ENCODE measurements at regions of chr15 and their contacts with region 1.

Region 1: DNA sequence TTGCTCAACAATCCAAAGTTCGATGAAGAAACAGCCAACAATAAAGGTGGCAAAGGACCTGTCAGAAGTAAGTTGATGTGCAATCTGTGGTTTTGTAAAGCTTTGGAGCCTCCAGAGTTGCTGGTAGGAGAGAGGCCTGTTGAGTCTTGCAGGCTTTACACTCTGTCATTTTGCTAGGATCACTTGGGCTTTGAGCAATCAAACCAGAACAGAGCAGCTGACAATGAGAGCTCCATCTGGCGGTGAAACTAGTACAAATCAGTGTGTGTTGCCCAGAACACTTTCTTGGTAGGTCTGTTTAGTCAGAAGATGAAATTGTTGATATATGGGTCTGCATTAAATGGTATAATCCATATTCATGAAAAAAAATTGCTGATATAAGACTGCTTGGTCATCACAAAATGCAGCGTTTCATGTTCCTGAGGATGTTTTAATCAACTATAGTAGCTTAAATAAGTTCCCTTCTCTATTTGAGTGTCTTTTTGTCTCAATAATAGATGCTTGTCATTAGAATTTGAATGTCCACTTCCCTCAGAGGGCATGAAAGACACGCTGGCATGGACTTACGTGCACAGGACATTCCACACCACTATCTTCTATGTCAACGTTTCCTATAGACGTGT is 25.7 kb downstream of the TMOD2 start:
- DNase-seq: peak; percentile 30 to 81 (median 63)
- ATAC-seq: peak; percentile 71
- H3K4me3 ChIP-seq: no peak overlapping the region
- H3K4me3 Mint-ChIP-seq: no peak overlapping the region
- H3K27ac ChIP-seq: no peak overlapping the region
- H3K27ac Mint-ChIP-seq: no peak overlapping the region
- H3K4me1 ChIP-seq: no peaks in the 10 kb centered on the region
- H3K4me1 Mint-ChIP-seq: peaks cover 6% of the 10 kb centered on the region
- H3K27me3 ChIP-seq: no peaks in the 10 kb centered on the region
- H3K27me3 Mint-ChIP-seq: no peaks in the 10 kb centered on the region
- CTCF ChIP-seq: peak; percentile 67

Region 2: DNA sequence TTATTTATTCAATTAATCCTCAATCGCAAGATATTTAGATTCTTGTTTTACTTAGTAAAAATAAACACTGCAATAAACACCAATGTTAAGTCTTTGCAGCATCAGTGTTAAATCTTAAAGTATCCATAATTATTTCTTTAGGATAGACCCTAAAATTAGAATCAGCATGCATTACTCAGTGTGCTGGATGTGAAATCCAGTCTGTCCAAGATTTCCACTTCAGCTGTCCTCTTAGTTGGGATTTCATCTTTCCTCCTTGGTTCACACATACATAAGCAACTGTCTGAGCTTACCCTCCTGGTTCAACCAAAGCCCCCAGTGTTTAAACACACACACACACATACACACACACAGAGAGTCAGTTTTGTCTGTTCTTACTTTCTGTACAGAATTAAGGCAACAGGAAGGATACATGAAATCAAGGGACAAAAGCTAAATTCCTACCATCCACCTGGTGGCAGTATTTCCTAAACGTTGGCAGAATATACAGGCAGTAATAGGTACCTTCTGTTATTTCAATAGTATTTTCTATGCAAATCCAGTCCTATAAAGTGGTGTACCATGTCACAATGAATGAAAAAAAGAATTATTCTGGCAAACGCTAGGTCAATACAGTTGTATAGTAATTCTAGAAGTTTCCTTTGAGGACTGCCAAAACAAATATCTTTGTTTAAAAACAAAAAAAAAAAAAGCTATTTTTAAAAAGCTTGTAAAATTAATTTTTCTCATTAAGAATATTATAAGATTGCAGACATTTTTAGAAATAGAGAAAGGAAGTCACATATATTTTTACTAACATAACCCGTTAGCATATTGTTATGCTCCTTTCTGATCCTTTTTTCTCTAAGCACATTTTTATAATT is 127.2 kb before region 1 on chr15:
- CTCF ChIA-PET with region 1: interaction called, 314 read pairs
- POLR2A ChIA-PET with region 1: interaction called, 8 read pairs
- intact Hi-C with region 1: loop called (anchors 1 kb)
- DNase-seq: peak in 7 of 9 experiments; percentile 26 to 85 (median 48)
- ATAC-seq: peak; percentile 85
- H3K4me3 ChIP-seq: no peak overlapping the region
- H3K4me3 Mint-ChIP-seq: no peak overlapping the region
- H3K27ac ChIP-seq: no peak overlapping the region
- H3K27ac Mint-ChIP-seq: no peak overlapping the region
- H3K4me1 ChIP-seq: no peaks in the 10 kb centered on the region
- H3K4me1 Mint-ChIP-seq: no peaks in the 10 kb centered on the region
- H3K27me3 ChIP-seq: no peaks in the 10 kb centered on the region
- H3K27me3 Mint-ChIP-seq: peaks cover 3% of the 10 kb centered on the region
- CTCF ChIP-seq: peak; percentile 92

Region 3: DNA sequence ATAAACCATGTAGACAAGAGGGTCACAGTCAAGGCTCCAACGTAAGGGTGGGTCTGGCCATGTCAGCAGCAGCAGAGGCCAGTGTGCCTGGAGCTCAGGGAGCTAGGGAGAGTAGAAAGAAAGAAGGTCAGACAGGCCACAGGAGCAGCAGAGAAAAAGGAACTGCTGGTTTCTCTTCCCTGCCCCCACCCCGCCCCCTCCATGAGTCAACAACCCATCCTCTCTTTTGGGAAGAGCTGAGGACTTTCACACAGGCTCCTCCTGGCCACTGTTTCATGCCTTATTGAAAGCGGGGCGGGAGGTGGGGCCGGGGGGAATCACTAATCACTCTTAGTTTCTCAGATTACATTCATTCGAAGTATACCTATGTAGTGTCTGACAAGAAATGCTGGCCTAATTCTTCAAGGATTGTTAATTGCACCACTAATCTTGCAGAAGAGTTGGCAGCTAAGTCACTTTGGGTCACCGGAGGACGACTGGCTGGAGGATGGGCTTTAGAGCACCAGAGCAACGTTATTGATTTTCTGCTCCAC is 104.8 kb before region 1 on chr15:
- CTCF ChIA-PET with region 1: interaction called, 12 read pairs
- POLR2A ChIA-PET with region 1: no interaction called
- intact Hi-C with region 1: no loop called
- DNase-seq: no peak
- ATAC-seq: no peak
- H3K4me3 ChIP-seq: no peak overlapping the region
- H3K4me3 Mint-ChIP-seq: no peak overlapping the region
- H3K27ac ChIP-seq: no peak overlapping the region
- H3K27ac Mint-ChIP-seq: no peak overlapping the region
- H3K4me1 ChIP-seq: no peaks in the 10 kb centered on the region
- H3K4me1 Mint-ChIP-seq: no peaks in the 10 kb centered on the region
- H3K27me3 ChIP-seq: no peaks in the 10 kb centered on the region
- H3K27me3 Mint-ChIP-seq: peaks cover 13% of the 10 kb centered on the region
- CTCF ChIP-seq: no peak

Region 4: GRCh38 chr15:51688863-51689262 is 88.2 kb before region 1 on chr15:
- CTCF ChIA-PET with region 1: interaction called, 15 read pairs
- POLR2A ChIA-PET with region 1: no interaction called
- intact Hi-C with region 1: no loop called
- DNase-seq: peak in 2 of 9 experiments; percentile 21 to 43
- ATAC-seq: no peak
- H3K4me3 ChIP-seq: no peak overlapping the region
- H3K4me3 Mint-ChIP-seq: no peak overlapping the region
- H3K27ac ChIP-seq: no peak overlapping the region
- H3K27ac Mint-ChIP-seq: no peak overlapping the region
- H3K4me1 ChIP-seq: no peaks in the 10 kb centered on the region
- H3K4me1 Mint-ChIP-seq: peaks cover 6% of the 10 kb centered on the region
- H3K27me3 ChIP-seq: no peaks in the 10 kb centered on the region
- H3K27me3 Mint-ChIP-seq: peaks cover 34% of the 10 kb centered on the region
- CTCF ChIP-seq: no peak

Region 5: DNA sequence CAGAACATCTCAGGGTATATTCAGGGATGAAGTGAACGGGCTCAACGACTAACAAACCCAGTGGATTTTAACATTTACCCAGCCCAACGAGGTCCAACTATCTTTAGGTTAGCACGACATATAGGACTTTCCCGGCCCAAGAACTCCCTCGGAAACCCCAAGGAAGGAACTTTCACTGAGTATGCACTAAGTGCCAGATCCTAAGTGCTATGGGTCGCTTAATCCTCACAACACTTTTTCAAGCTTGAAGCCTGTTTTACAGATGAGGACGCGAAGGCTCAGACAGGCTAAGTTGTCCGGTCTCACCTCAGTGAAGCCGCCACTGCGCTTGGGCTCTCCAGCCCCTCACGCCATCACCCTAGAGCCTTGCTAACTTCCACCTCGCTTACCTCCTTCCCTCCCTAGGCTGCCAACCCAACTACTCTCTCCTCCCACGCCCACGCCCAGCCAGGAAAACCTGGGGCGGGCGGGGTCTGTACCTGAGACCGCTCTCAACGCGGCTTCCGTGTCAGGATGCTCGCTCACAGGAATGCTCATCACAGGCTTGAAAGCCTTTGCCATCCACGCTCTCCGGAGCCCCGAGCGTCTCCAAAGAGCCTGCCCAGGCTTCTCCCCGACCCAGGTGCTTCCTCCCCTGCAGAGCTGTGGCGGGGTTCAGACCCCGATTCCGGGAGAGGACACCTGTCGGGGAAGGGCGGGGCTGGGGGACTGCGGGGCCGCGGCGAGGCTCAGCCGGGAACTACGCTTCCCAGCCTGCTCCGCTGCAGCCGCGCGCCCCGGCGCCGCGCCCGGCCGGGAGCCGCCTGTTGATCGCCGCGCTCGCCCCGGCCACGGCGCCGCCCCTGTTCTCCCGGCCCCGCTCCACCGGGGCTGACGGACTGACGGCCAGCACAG is 26.0 kb before region 1 on chr15 and contains the start of gene TMOD2:
- CTCF ChIA-PET with region 1: interaction called, 38 read pairs
- POLR2A ChIA-PET with region 1: no interaction called
- intact Hi-C with region 1: no loop called
- DNase-seq: peak in 7 of 9 experiments; percentile 38 to 75 (median 52)
- ATAC-seq: peak; percentile 88
- H3K4me3 ChIP-seq: peak within 1 kb of the TSS; percentile 63 to 64
- H3K4me3 Mint-ChIP-seq: peak within 1 kb of the TSS; percentile 89
- H3K27ac ChIP-seq: peak within 1 kb of the TSS in 1 of 2 experiments; percentile 7
- H3K27ac Mint-ChIP-seq: peak within 1 kb of the TSS; percentile 74
- H3K4me1 ChIP-seq: peaks cover 13% of the 10 kb centered on the region
- H3K4me1 Mint-ChIP-seq: peaks cover 46% of the 10 kb centered on the region
- H3K27me3 ChIP-seq: peaks cover 0 to 2% of the 10 kb centered on the region in 2 experiments
- H3K27me3 Mint-ChIP-seq: no peaks in the 10 kb centered on the region
- CTCF ChIP-seq: no peak
- total RNA-seq, gene TMOD2: 5.1 to 5.3 TPM

Measured in CD8-positive, alpha-beta T cell (primary cell).